ENCODE measurements at regions of chr6 and their contacts with region 1.

Region 1: DNA sequence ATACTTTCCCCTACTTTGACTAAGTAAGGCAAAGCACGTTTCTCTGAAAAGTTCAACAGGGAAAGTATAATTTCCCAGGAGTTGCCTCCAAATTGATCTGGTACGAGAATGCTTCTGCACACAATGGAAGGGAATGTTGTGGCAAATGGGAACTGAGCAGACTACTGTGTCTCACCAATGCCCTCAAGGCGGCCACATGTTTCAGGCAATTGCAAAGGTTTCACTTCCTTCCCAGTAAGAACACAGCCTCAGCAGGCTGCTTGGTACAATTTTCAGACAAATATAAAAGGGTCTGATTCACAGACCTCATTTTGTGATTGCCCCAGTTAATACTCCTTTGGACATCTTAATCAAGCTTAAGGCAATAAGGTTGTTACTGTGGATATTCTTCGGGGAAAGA is 71.2 kb downstream of the KIAA0319 start:
- DNase-seq: no peak
- ATAC-seq: no peak
- H3K4me3 ChIP-seq: no peak overlapping the region
- H3K27ac ChIP-seq: no peak overlapping the region
- H3K4me1 ChIP-seq: no peaks in the 10 kb centered on the region
- H3K27me3 ChIP-seq: peaks cover 0 to 9% (median 0%) of the 10 kb centered on the region in 9 donors
- CTCF ChIP-seq: no peak
- POLR2A ChIP-seq: no peak

Region 2: DNA sequence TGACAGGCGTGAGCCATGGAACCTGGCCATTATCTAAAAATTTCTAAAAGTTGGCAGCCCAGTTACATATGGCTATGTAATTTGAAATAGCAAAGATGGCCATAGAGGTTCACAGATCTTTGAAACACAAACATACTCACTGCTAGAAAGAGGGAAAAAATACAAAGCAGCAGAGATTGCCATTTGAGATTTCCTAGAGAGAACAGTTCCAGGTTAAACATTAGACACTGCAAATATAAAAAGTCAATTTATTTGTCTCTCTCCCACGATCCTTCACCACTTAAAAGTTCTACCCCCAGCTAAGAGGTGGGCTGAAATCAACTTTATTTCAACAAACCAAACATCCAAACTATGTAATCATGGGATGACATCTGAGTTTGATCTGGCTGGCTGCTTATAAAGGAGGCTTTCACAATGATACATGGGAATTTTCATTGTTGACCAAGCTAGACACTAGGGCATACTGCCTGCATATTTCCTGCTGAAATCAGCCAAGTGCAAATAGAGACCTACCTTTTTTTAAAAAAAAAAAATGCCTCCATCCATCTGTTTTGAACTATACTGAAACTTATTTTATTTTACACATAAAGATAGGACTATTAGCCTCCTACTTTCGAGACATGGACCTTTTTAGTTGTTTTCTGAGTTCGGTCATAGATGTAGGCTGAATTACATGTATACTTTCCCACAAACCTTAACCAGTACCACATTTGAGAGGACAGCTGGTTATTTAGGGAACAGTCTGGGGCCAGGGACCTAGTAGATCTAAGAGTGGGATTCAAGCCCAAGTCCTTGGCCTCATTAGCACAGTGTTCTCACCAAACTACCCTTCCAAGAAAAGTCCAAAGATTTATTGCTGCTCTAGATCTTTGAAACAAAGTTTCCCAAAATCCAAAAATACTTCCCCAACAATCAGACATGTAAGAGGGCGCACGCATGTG is 233.5 kb before region 1 on chr6:
- intact Hi-C with region 1: no loop called
- DNase-seq: no peak
- ATAC-seq: no peak
- H3K4me3 ChIP-seq: no peak overlapping the region
- H3K27ac ChIP-seq: no peak overlapping the region
- H3K4me1 ChIP-seq: no peaks in the 10 kb centered on the region
- H3K27me3 ChIP-seq: peaks cover 0 to 26% (median 7%) of the 10 kb centered on the region in 9 donors
- CTCF ChIP-seq: no peak
- POLR2A ChIP-seq: no peak

Region 3: DNA sequence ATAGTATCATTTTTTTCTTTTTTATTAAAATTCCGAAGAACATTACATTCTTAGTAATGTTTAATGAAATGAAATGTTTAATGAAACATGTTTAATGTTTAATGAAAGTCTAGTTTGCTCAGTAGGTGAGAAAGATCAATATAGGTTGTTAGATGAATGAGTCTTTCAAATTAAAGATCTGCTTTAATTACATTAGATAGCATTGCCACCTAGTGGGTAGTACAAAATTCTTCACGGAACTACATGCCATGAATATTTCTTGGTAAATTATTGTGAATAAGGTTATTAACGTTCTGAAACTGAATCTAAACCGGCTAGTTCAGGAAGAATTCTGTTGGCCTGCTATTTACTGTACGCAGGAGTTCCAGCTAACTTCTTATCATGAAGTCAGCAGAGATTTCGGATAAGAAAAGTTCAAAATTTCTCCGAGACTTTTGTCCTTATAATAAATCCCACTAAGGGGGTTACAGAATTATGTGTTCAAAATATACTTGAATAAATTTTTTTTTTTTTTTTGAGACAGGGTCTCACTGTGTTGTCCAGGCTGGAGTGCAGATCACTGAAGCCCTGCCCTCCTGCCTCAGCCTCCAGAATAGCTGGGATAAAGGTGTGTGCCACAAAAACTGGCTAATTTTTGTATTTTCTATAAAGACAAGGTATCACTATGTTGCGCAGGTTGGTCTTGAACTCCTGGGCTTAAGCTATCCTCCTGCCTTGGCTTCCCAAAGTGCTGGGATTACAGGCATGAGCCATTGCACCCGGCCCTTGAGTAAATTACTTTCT is 192.1 kb after region 1 on chr6:
- intact Hi-C with region 1: loop called in 9 of 10 experiments (anchors 2 to 10 kb)
- DNase-seq: no peak
- ATAC-seq: no peak
- H3K4me3 ChIP-seq: no peak overlapping the region
- H3K27ac ChIP-seq: no peak overlapping the region
- H3K4me1 ChIP-seq: no peaks in the 10 kb centered on the region
- H3K27me3 ChIP-seq: no peaks in the 10 kb centered on the region
- CTCF ChIP-seq: peak in 11 of 12 donors; percentile 27 to 60 (median 46)
- POLR2A ChIP-seq: no peak

Measured in heart left ventricle (tissue), 16 donors.